Activated CD4-positive, alpha-beta memory T cell treated with anti-CD3 and anti-CD28 coated beads, Interleukin-2, amount 10 ng/mL, durations not matched to agents 7 days and 5 days (primary cell): ENCODE measurements at regions of chr1 and their contacts with region 1.

Region 1: GRCh38 chr1:156020292-156021089 is at the start of gene SSR2:
- DNase-seq: peak; percentile 91
- H3K4me3 Mint-ChIP-seq: peak within 1 kb of the TSS; percentile 86
- H3K27ac Mint-ChIP-seq: peak within 1 kb of the TSS; percentile 93
- H3K4me1 Mint-ChIP-seq: peaks cover 37% of the 10 kb centered on the region
- H3K27me3 Mint-ChIP-seq: peaks cover 4% of the 10 kb centered on the region
- total RNA-seq, gene SSR2: 262 to 268 TPM

Region 2: GRCh38 chr1:155952505-155952890 is 68.0 kb before region 1 on chr1:
- CTCF ChIA-PET with region 1: no interaction called
- POLR2A ChIA-PET with region 1: no interaction called
- DNase-seq: no peak
- H3K4me3 Mint-ChIP-seq: no peak overlapping the region
- H3K27ac Mint-ChIP-seq: no peak overlapping the region
- H3K4me1 Mint-ChIP-seq: peaks cover 4% of the 10 kb centered on the region
- H3K27me3 Mint-ChIP-seq: no peaks in the 10 kb centered on the region

Region 3: GRCh38 chr1:156006666-156007376 is 13.7 kb before region 1 on chr1:
- CTCF ChIA-PET with region 1: interaction called, 6 read pairs
- POLR2A ChIA-PET with region 1: interaction called, 19 read pairs
- DNase-seq: no peak
- H3K4me3 Mint-ChIP-seq: no peak overlapping the region
- H3K27ac Mint-ChIP-seq: no peak overlapping the region
- H3K4me1 Mint-ChIP-seq: peaks cover 36% of the 10 kb centered on the region
- H3K27me3 Mint-ChIP-seq: peaks cover 2% of the 10 kb centered on the region

Region 4: DNA sequence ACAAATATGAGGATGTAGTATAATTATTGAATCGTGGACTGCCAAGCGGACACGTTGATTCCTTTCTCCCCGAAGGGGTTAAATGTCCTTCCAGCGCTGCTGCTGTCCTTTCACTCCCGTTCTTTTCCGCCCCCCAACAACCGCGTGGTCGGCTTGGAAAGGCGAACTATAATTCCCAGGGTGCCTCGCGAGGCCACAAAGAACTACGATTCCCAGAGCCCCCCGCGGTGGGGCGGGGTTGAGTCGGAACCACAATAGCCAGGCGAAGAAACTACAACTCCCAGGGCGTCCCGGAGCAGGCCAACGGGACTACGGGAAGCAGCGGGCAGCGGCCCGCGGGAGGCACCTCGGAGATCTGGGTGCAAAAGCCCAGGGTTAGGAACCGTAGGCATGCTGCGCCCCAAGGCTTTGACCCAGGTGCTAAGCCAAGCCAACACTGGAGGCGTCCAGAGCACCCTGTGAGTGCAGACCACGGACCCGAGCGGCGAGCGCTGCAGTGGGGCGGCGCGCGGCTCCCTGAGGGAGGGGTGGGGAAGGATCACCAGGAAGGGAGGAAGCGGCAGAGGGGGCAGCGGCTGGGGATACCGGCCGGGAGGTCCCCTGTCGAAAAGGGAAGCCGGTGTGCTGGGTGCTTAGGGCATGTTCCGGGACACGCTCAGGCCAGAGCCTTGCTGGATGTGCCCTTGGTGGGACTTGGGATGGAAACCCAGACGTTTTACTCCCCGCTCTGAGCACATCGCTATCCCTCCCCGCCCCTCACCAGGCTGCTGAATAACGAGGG is 34.2 kb after region 1 on chr1 and contains the start of gene LAMTOR2:
- CTCF ChIA-PET with region 1: interaction called, 10 read pairs
- POLR2A ChIA-PET with region 1: interaction called, 3 read pairs
- DNase-seq: peak; percentile 97
- H3K4me3 Mint-ChIP-seq: peak within 1 kb of the TSS; percentile 91
- H3K27ac Mint-ChIP-seq: peak within 1 kb of the TSS; percentile 82
- H3K4me1 Mint-ChIP-seq: peaks cover 33% of the 10 kb centered on the region
- H3K27me3 Mint-ChIP-seq: no peaks in the 10 kb centered on the region
- total RNA-seq, gene LAMTOR2: 63.1 to 66.2 TPM

Region 5: DNA sequence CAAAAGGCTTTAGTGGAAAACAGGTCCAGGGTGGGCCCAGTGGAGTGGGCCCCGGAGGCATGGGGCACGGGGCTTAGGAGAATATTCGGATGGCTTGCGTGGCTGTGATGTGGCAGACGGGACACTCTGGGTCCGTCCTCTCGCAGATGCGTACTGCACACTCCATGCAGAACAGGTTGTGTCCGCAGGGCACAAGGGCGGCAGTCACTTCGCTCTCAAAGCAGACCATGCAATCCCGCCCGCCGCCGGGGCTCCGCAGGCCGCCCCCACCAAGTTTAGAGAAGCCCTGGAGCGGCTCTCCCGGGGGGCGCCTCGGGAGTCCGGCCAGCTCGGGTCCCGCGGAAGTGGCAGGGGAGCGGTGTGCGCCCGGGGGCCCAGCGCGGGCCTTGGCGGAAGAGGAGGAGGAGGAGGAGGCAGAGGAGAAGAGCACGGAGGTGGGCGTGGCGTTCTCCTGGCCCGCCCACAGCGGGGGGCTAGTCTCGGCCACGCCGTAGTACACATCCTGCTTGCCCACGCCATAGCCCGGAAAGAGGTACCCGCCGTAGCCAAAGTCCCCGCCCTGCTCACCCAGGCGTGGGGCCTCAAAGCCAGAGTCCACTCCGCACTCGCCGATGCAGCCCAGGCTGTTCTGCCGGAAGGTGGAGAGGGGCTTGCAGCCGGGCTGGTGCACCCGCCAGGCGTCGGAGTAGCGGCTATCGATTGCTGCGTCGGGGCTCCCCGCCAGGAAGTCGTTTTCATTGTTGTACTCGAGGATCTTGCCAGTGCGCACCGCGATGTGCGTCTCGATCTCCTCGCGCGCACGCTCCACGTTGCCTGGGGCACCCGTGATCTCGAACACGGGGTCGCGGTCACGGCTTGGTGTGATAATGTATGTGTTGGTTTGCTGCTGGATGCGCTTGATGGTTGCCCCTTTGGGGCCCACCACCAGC is 56.3 kb after region 1 on chr1:
- CTCF ChIA-PET with region 1: no interaction called
- POLR2A ChIA-PET with region 1: no interaction called
- DNase-seq: no peak
- H3K4me3 Mint-ChIP-seq: no peak overlapping the region
- H3K27ac Mint-ChIP-seq: no peak overlapping the region
- H3K4me1 Mint-ChIP-seq: peaks cover 6% of the 10 kb centered on the region
- H3K27me3 Mint-ChIP-seq: peaks cover 37% of the 10 kb centered on the region